PC-3 (cell line): ENCODE measurements at regions of chr6 and their contacts with region 1.

Region 1: GRCh38 chr6:93447874-93448273 is 28.5 kb upstream of the EPHA7 start:
- DNase-seq: peak; percentile 27
- ATAC-seq: peak; percentile 79
- H3K4me3 ChIP-seq: no peak overlapping the region
- H3K27ac ChIP-seq: no peak overlapping the region
- H3K4me1 ChIP-seq: no peaks in the 10 kb centered on the region
- H3K27me3 ChIP-seq: no peaks in the 10 kb centered on the region
- CTCF ChIP-seq: peak; percentile 49

Region 2: GRCh38 chr6:93343476-93343875 is 104.4 kb before region 1 on chr6:
- CTCF ChIA-PET with region 1: no interaction called
- POLR2A ChIA-PET with region 1: no interaction called
- intact Hi-C with region 1: no loop called
- DNase-seq: no peak
- ATAC-seq: no peak
- H3K4me3 ChIP-seq: no peak overlapping the region
- H3K27ac ChIP-seq: no peak overlapping the region
- H3K4me1 ChIP-seq: no peaks in the 10 kb centered on the region
- H3K27me3 ChIP-seq: no peaks in the 10 kb centered on the region
- CTCF ChIP-seq: no peak

Region 3: DNA sequence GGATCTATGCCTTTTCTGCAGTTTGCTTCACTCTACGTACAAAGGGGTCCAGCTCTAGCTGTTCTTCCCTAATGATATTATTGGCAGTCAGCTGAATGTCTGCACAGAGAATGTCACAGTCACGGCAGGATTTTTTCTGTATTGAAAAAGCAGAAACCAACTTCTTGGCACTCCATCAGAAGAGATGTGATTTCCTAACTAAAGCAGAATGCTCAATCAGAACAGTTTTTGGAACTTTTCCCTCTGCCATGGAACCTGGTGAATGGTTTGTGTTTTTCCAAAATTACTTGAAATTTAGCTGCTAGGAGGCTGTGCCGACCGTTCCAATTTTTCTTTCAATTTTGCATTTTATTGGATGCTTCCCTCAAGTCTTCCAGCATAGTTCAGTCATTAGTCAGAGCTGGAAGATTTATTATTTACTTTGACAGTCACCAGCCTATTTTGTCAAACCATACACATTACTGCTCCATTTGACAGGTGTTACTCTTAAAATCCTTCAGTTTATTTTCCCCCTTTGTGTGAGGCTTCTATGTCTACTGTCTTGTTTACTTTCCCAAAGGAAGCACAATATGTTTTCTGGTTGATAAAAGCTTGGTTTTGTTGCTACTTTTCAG is 231.1 kb after region 1 on chr6:
- CTCF ChIA-PET with region 1: no interaction called
- POLR2A ChIA-PET with region 1: no interaction called
- intact Hi-C with region 1: loop called (anchors 10 kb)
- DNase-seq: peak; percentile 71
- ATAC-seq: peak; percentile 51
- H3K4me3 ChIP-seq: peak overlapping the region; percentile 56; the same call in 1 of the 2 replicates
- H3K27ac ChIP-seq: peak overlapping the region; percentile 68
- H3K4me1 ChIP-seq: peaks cover 39% of the 10 kb centered on the region
- H3K27me3 ChIP-seq: no peaks in the 10 kb centered on the region
- CTCF ChIP-seq: no peak

Region 4: GRCh38 chr6:93727447-93727846 is 279.6 kb after region 1 on chr6:
- CTCF ChIA-PET with region 1: no interaction called
- POLR2A ChIA-PET with region 1: no interaction called
- intact Hi-C with region 1: loop called (anchors 2 kb)
- DNase-seq: peak; percentile 55
- ATAC-seq: peak; percentile 93
- H3K4me3 ChIP-seq: no peak overlapping the region
- H3K27ac ChIP-seq: 0 out of 2 replicates have a peak overlapping the region, but pooled peaks have one; percentile 18
- H3K4me1 ChIP-seq: 0 out of 2 replicates have a peak, but pooled peaks cover 5% of the 10 kb centered on the region
- H3K27me3 ChIP-seq: no peaks in the 10 kb centered on the region
- CTCF ChIP-seq: no peak

Region 5: GRCh38 chr6:93792746-93793145 is 344.9 kb after region 1 on chr6:
- CTCF ChIA-PET with region 1: no interaction called
- POLR2A ChIA-PET with region 1: no interaction called
- intact Hi-C with region 1: loop called (anchors 10 kb)
- DNase-seq: no peak
- ATAC-seq: no peak
- H3K4me3 ChIP-seq: no peak overlapping the region
- H3K27ac ChIP-seq: no peak overlapping the region
- H3K4me1 ChIP-seq: peaks cover 4% of the 10 kb centered on the region; the same call in 1 of the 2 replicates
- H3K27me3 ChIP-seq: no peaks in the 10 kb centered on the region
- CTCF ChIP-seq: no peak

Region 6: DNA sequence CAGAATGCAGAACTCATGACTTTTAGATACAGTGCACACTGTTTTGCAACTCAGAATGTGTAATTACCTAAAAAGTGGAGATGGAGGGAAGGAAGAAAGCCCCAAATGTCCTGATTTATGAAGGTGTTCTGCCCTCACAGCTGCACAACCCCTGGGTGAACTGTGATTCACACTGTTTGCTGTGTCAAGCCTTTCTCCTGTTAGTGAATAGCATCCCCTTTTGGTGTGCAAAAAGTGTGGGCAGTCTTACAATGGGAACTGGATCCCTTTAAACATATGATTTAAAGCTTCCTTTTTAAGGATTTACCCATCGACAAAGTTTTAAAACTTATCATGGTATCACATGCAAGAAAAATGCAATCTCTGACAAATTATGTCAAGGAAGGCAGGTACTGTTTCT is 604.9 kb after region 1 on chr6:
- CTCF ChIA-PET with region 1: no interaction called
- POLR2A ChIA-PET with region 1: no interaction called
- intact Hi-C with region 1: loop called (anchors 1 kb)
- DNase-seq: peak; percentile 13
- ATAC-seq: peak; percentile 76
- H3K4me3 ChIP-seq: no peak overlapping the region
- H3K27ac ChIP-seq: no peak overlapping the region
- H3K4me1 ChIP-seq: no peaks in the 10 kb centered on the region
- H3K27me3 ChIP-seq: no peaks in the 10 kb centered on the region
- CTCF ChIP-seq: peak; percentile 38

Region 7: GRCh38 chr6:94065707-94066337 is 617.9 kb after region 1 on chr6:
- CTCF ChIA-PET with region 1: no interaction called
- POLR2A ChIA-PET with region 1: no interaction called
- intact Hi-C with region 1: loop called (anchors 5 kb)
- DNase-seq: no peak
- ATAC-seq: no peak
- H3K4me3 ChIP-seq: no peak overlapping the region
- H3K27ac ChIP-seq: no peak overlapping the region
- H3K4me1 ChIP-seq: no peaks in the 10 kb centered on the region
- H3K27me3 ChIP-seq: no peaks in the 10 kb centered on the region
- CTCF ChIP-seq: no peak

Region 8: DNA sequence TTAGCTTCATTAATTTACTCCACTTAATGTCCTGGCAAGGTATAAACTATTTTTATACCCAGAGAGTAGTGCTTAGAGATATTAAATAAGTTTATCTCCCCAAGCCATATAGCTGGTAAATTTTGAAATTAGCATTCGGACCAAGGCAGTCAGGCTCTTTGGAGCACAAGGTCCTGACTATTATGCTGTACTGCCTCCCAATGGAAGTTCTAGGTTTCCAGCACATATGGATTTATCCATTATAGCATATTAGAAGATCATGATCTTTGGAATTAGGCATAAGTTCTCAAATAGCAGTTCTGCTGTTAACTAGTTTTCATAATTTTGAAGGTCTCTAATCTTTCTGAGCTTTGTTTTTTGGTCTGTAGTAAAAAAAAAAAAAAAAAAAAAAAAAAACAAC is 806.8 kb after region 1 on chr6:
- CTCF ChIA-PET with region 1: no interaction called
- POLR2A ChIA-PET with region 1: no interaction called
- intact Hi-C with region 1: loop called (anchors 2 kb)
- DNase-seq: peak; percentile 5
- ATAC-seq: peak; percentile 31; the same call in 1 of the 2 replicates
- H3K4me3 ChIP-seq: no peak overlapping the region
- H3K27ac ChIP-seq: no peak overlapping the region
- H3K4me1 ChIP-seq: no peaks in the 10 kb centered on the region
- H3K27me3 ChIP-seq: no peaks in the 10 kb centered on the region
- CTCF ChIP-seq: peak; percentile 32; the same call in 1 of the 2 replicates